ENCODE measurements at regions of chr3 and their contacts with region 1.

Region 1: GRCh38 chr3:4493014-4493940 is at the start of gene ITPR1:
- DNase-seq: peak; percentile 100
- H3K4me3 ChIP-seq: peak within 1 kb of the TSS; percentile 76 to 85 (median 82)
- H3K27ac ChIP-seq: peak within 1 kb of the TSS; percentile 90 to 96 (median 94)
- H3K4me1 ChIP-seq: peaks cover 0 to 43% (median 31%) of the 10 kb centered on the region in 4 donors
- H3K27me3 ChIP-seq: no peaks in the 10 kb centered on the region
- CTCF ChIP-seq: no peak
- EP300 ChIP-seq: peak in 1 of 4 donors; percentile 23
- POLR2A ChIP-seq: peak; percentile 99
- total RNA-seq, gene ITPR1: 111 to 206 (median 134) TPM

Region 2: DNA sequence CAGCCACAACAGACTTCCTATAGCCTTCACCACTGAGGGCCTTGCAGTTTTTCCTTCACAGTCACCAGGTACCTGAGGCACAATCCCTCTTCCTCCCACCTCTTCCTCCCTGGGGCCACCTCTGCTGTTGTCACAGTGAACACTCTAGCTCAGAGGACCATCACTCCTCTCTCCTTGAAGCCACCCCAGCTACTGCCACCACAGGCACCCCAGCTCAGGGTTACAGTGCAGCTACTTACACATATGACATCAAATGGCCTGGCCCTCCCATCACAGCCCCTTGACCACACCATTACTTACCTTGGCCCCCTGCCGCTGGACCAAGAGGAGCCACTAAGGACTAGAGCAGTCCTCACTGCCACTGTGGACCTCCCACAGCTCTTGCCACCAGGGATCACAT is 1100.3 kb before region 1 on chr3:
- intact Hi-C with region 1: no loop called
- DNase-seq: no peak
- H3K4me3 ChIP-seq: no peak overlapping the region
- H3K27ac ChIP-seq: no peak overlapping the region
- H3K4me1 ChIP-seq: no peaks in the 10 kb centered on the region
- H3K27me3 ChIP-seq: no peaks in the 10 kb centered on the region
- CTCF ChIP-seq: no peak
- EP300 ChIP-seq: no peak
- POLR2A ChIP-seq: no peak

Region 3: DNA sequence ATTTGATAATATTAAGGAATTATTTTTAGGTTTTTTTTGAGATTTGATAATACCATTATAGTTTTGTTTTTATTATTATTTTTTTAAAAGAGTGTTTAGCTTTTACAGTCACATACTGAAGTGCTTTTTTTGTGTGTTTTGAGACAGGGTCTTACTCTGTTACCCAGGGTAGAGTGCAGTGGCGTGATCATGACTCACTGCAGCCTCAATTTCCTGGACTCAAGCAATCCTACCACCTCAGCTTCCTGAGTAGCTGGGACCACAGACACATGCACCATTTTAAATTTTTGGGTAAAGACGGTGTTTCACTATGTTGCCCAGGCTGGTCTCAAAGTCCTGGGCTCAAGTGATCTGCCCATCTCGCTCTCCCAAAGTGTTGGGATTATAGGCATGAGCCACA is 99.2 kb before region 1 on chr3:
- intact Hi-C with region 1: no loop called
- DNase-seq: no peak
- H3K4me3 ChIP-seq: no peak overlapping the region
- H3K27ac ChIP-seq: no peak overlapping the region
- H3K4me1 ChIP-seq: no peaks in the 10 kb centered on the region
- H3K27me3 ChIP-seq: no peaks in the 10 kb centered on the region
- CTCF ChIP-seq: no peak
- EP300 ChIP-seq: no peak
- POLR2A ChIP-seq: no peak

Region 4: GRCh38 chr3:4466741-4467521 is 26.3 kb before region 1 on chr3 and contains the start of gene SUMF1:
- intact Hi-C with region 1: loop called (anchors 2 kb)
- DNase-seq: peak; percentile 89
- H3K4me3 ChIP-seq: peak within 1 kb of the TSS; percentile 77 to 88 (median 80)
- H3K27ac ChIP-seq: peak within 1 kb of the TSS; percentile 81 to 83 (median 82)
- H3K4me1 ChIP-seq: peaks cover 0 to 15% (median 8%) of the 10 kb centered on the region in 4 donors
- H3K27me3 ChIP-seq: no peaks in the 10 kb centered on the region
- CTCF ChIP-seq: no peak
- EP300 ChIP-seq: no peak
- POLR2A ChIP-seq: peak in 1 of 2 donors; percentile 15
- total RNA-seq, gene SUMF1: 20.2 to 57.4 (median 31.0) TPM

Region 5: GRCh38 chr3:4584456-4585249 is 91.4 kb after region 1 on chr3:
- intact Hi-C with region 1: loop called (anchors 2 kb)
- DNase-seq: peak; percentile 67
- H3K4me3 ChIP-seq: peak overlapping the region; percentile 15 to 42 (median 38)
- H3K27ac ChIP-seq: peak overlapping the region; percentile 69 to 82 (median 78)
- H3K4me1 ChIP-seq: peaks cover 0 to 82% (median 70%) of the 10 kb centered on the region in 4 donors
- H3K27me3 ChIP-seq: no peaks in the 10 kb centered on the region
- CTCF ChIP-seq: no peak
- EP300 ChIP-seq: no peak
- POLR2A ChIP-seq: no peak

Region 6: DNA sequence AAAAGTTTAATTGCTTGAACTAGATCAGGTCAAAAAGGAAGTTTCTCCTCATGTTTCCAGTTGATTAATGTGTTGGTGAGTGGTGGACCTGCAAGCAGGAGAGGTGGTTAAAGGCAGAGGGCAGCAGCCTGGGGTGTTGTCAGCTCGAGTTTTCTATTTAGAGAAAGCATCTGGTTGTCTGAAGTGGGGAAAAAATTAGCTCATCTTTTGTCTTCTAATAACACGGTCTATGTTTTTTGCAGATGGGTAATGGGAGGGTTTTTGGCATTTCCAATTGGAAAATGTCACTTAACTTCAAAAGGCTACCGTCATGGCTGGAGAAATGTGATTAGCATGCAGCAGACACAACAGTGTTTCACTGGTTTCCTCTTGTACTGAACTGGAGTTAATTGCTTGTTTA is 122.5 kb after region 1 on chr3:
- intact Hi-C with region 1: no loop called
- DNase-seq: no peak
- H3K4me3 ChIP-seq: no peak overlapping the region
- H3K27ac ChIP-seq: no peak overlapping the region
- H3K4me1 ChIP-seq: peaks cover 0 to 7% (median 2%) of the 10 kb centered on the region in 4 donors
- H3K27me3 ChIP-seq: no peaks in the 10 kb centered on the region
- CTCF ChIP-seq: no peak
- EP300 ChIP-seq: no peak
- POLR2A ChIP-seq: no peak

Region 7: DNA sequence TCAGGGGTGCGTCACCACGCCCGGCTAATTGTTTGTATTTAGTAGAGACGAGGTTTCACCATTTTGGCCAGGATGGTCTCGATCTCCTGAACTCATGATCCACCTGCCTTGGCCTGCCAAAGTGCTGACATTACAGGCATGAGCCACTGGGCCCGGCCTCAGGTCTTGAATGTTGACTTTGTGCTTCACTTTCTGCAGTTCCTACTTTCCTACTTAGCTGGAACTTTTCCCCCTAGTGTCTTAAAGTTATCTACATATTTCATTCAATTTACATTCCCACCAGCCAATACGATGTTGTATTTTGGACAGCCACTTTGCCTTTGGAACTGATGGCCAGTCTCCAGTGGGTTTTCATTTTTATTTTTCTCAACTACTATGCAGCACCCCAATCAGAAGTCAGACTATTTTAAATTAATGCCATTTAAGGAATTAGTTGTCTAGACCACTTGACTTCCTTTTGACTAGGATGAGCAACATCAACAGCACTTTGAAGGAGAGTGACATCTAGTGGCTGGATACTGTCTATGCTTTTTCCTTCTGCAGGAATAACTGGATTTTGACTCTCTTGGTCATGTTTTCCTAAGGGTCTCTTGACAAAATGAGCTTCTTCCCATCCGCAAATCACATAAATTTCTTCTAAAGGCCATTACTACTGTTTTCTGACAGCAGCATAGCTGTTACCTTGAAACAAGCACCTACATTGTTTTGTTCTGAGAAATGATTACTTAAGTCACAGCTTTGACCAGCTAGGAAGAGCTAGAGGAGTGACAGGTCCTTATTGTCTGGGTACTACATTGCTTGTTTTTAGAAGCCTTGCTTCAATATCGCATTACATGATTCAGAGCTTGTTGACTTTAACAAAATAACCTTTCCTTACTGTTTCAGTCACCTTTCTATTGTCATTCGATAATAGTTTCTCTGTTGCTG is 140.1 kb after region 1 on chr3:
- intact Hi-C with region 1: loop called (anchors 2 kb)
- DNase-seq: no peak
- H3K4me3 ChIP-seq: no peak overlapping the region
- H3K27ac ChIP-seq: peak overlapping the region in 3 of 4 donors; percentile 34 to 47 (median 42)
- H3K4me1 ChIP-seq: peaks cover 0 to 3% (median 0%) of the 10 kb centered on the region in 4 donors
- H3K27me3 ChIP-seq: no peaks in the 10 kb centered on the region
- CTCF ChIP-seq: peak; percentile 70 to 87 (median 74)
- EP300 ChIP-seq: no peak
- POLR2A ChIP-seq: no peak

Region 8: GRCh38 chr3:4986782-4987537 is 493.7 kb after region 1 on chr3:
- intact Hi-C with region 1: loop called (anchors 10 kb)
- DNase-seq: peak; percentile 99
- H3K4me3 ChIP-seq: peak overlapping the region; percentile 21 to 54 (median 46)
- H3K27ac ChIP-seq: peak overlapping the region; percentile 98 to 99 (median 98)
- H3K4me1 ChIP-seq: peaks cover 0 to 65% (median 56%) of the 10 kb centered on the region in 4 donors
- H3K27me3 ChIP-seq: no peaks in the 10 kb centered on the region
- CTCF ChIP-seq: no peak
- EP300 ChIP-seq: peak; percentile 75 to 99 (median 90)
- POLR2A ChIP-seq: peak; percentile 51 to 55

Region 9: DNA sequence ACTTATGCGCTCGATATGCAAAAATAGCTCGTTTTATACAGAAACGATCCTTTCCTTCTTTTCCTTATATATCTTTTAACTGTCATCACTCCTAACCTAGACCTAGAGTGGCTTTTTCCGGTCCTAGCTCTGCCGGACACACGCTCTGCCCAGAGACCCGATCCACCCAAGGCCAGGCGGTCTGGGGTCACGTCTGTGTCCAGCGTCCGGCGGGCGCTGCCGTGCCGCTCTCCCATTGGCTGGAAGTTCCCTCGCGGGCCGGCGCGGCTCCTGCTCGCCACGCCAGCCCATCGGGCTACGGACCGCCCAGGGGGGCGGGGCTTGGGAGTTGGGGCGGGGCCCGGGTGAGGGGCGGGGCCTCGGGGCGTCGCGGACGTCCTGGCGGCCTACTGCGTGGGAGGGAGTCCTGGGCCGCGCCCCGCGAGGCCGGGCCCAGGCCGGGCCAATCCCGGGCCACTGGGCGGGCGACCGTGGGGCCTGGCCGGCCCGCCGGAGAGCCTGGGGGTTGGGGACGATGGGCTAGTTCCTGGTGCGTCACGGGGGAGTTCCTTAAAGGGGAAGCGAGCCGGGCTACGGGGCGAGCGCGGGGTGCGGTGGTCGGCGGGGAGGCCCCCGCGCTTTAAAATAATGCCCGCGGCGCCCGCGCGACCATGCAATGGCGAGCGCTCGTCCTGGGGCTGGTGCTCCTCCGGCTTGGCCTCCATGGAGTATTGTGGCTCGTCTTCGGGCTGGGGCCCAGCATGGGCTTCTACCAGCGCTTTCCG is 694.1 kb after region 1 on chr3 and contains the start of gene EDEM1:
- intact Hi-C with region 1: loop called (anchors 2 kb)
- DNase-seq: peak; percentile 97
- H3K4me3 ChIP-seq: peak within 1 kb of the TSS; percentile 59 to 96 (median 86)
- H3K27ac ChIP-seq: peak within 1 kb of the TSS; percentile 89 to 98 (median 96)
- H3K4me1 ChIP-seq: peaks cover 0 to 46% (median 28%) of the 10 kb centered on the region in 4 donors
- H3K27me3 ChIP-seq: no peaks in the 10 kb centered on the region
- CTCF ChIP-seq: no peak
- EP300 ChIP-seq: no peak
- POLR2A ChIP-seq: peak; percentile 55 to 75
- total RNA-seq, gene EDEM1: 14.3 to 23.8 (median 20.5) TPM